ENCODE measurements at regions of chr11 and their contacts with region 1.

Region 1: DNA sequence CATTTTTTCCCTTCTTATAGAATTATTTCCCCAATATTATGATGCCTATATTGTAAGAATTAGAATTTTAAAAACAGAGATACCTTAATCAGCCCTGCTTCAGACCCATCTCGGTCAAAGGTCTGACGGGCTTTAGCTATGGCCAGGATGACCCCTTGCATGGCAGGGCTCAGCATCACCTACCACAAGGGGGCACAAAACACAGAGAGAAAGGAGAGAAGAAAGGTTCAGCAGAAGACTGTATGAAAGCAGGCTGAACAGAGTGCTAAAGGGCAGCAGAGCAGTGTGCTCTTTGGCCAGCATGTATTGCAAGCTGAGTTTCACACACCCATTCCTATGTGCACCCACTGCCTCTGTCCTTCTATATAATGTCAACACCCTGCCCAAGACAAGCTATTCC is 26.8 kb downstream of the CLDN25 start:
- H3K4me3 ChIP-seq: no peak overlapping the region
- H3K27ac ChIP-seq: no peak overlapping the region
- H3K4me1 ChIP-seq: no peaks in the 10 kb centered on the region
- CTCF ChIP-seq: no peak

Region 2: GRCh38 chr11:113446112-113446511 is 360.3 kb before region 1 on chr11:
- CTCF ChIA-PET with region 1: no interaction called
- POLR2A ChIA-PET with region 1: no interaction called
- H3K4me3 ChIP-seq: no peak overlapping the region
- H3K27ac ChIP-seq: no peak overlapping the region
- H3K4me1 ChIP-seq: no peaks in the 10 kb centered on the region
- CTCF ChIP-seq: no peak

Region 3: DNA sequence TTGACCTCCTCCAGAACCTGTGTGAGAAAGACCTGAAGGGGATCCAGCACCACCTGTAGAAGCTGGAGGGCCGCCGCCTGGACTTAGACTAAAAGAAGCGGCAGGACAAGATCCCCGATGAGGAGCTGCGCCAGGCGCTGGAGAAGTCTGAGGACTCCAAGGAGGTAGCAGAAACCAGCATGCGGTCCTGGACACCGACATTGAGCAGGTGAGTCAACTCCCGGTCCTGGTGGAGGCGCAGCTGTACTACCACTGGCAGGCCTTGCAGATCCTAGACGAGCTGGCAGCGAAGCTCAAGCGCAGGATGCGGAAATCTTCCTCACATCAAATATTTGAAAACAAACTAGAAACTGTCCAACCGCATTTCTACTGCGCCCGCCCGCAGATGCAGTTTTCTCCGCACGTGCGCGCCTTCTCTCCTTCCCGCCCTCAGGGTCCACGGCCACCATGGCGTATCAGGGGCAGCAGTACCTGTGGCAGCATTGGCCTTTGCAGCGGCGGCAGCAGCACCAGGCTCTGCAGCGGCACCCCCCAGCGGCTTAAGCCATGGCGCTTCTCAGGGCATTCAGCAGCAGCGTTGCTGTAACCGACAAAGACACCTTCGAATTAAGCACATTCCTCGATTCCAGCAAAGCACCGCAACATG is 16.6 kb before region 1 on chr11:
- CTCF ChIA-PET with region 1: no interaction called
- POLR2A ChIA-PET with region 1: no interaction called
- H3K4me3 ChIP-seq: no peak overlapping the region
- H3K27ac ChIP-seq: no peak overlapping the region
- H3K4me1 ChIP-seq: no peaks in the 10 kb centered on the region
- CTCF ChIP-seq: no peak

Region 4: GRCh38 chr11:113817162-113817561 is 10.8 kb after region 1 on chr11:
- CTCF ChIA-PET with region 1: interaction called, 28 read pairs
- POLR2A ChIA-PET with region 1: no interaction called
- H3K4me3 ChIP-seq: no peak overlapping the region
- H3K27ac ChIP-seq: no peak overlapping the region
- H3K4me1 ChIP-seq: no peaks in the 10 kb centered on the region
- CTCF ChIP-seq: no peak

Region 5: GRCh38 chr11:113896156-113896879 is 89.9 kb after region 1 on chr11:
- CTCF ChIA-PET with region 1: interaction called, 24 read pairs
- POLR2A ChIA-PET with region 1: no interaction called
- H3K4me3 ChIP-seq: no peak overlapping the region
- H3K27ac ChIP-seq: peak overlapping the region; percentile 2; the same call in 1 of the 2 replicates
- H3K4me1 ChIP-seq: no peaks in the 10 kb centered on the region; the same call in 1 of the 2 replicates
- CTCF ChIP-seq: peak; percentile 59

Region 6: DNA sequence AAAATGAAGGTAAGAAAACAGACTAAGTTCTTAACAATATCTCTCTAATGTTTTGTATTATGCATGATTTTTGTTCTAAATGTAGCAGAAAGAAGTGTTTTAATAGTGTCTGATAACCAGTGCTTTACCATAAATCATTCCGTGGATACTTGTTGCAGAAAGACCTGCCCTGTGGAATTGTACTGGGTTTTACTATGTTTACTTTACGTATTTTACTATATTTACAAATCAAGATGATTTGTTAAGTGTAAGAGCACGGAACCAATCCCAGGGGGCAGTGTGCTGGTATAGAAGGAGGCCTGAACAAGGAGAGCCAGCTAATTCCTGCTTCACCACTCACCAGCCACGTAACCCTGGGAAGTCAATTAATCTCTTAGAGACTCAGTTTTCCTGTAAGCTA is 99.6 kb after region 1 on chr11:
- CTCF ChIA-PET with region 1: interaction called, 11 read pairs
- POLR2A ChIA-PET with region 1: no interaction called
- H3K4me3 ChIP-seq: no peak overlapping the region
- H3K27ac ChIP-seq: peak overlapping the region; percentile 54
- H3K4me1 ChIP-seq: peaks cover 18% of the 10 kb centered on the region
- CTCF ChIP-seq: no peak

Measured in HEK293 (cell line).